Lower lobe of right lung (tissue), 2 donors: ENCODE measurements at regions of chr4 and their contacts with region 1.

Region 1: GRCh38 chr4:15956179-15956850 is 6.7 kb downstream of the FGFBP2 start:
- DNase-seq: peak; percentile 85
- ATAC-seq: peak; percentile 97
- H3K4me3 ChIP-seq: no peak overlapping the region
- H3K27ac ChIP-seq: no peak overlapping the region
- H3K4me1 ChIP-seq: no peaks in the 10 kb centered on the region
- H3K27me3 ChIP-seq: no peaks in the 10 kb centered on the region
- CTCF ChIP-seq: peak; percentile 86

Region 2: DNA sequence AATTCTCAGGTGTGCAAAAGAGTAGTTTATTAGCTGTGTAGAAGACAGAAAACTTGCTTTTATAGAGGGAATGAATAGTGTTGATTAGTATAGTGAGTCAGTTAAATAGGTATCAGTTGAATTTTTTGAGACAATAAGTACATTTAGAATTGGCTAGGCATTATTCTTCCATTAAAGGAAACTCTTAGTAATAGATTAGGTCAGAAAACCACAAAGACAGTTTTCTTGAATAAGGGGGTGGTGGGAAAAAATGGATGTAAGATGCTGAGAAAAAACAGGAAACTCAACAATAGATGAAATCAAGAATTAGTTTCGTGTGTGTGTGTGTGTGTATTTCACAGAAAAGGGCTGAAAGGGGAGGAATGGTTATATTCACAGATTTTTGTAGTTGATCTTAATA is 161.4 kb before region 1 on chr4:
- intact Hi-C with region 1: no loop called
- DNase-seq: no peak
- ATAC-seq: no peak
- H3K4me3 ChIP-seq: no peak overlapping the region
- H3K27ac ChIP-seq: no peak overlapping the region
- H3K4me1 ChIP-seq: no peaks in the 10 kb centered on the region
- H3K27me3 ChIP-seq: no peaks in the 10 kb centered on the region
- CTCF ChIP-seq: no peak

Region 3: DNA sequence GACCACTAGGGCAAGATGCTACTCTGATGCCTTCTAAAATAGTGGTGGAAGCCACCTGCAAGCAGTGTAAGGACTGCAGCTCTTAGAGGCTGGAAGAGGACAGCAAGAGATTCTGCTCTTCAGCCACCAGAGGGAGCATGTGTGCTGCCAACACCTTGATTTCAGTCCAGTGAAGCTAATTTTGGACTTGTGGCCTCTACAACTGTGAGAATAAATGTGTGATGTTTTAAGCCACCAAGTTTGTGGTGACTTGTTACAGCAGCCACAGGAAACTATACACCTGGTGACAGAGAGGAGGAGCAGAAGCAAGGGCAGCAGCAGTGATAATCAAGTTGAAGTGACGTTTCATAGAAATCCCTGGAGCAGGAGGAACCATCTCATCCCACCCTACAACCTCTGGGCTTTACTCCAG is 73.6 kb before region 1 on chr4:
- intact Hi-C with region 1: loop called (anchors 5 kb)
- DNase-seq: no peak
- ATAC-seq: peak; percentile 91
- H3K4me3 ChIP-seq: no peak overlapping the region
- H3K27ac ChIP-seq: no peak overlapping the region
- H3K4me1 ChIP-seq: no peaks in the 10 kb centered on the region
- H3K27me3 ChIP-seq: no peaks in the 10 kb centered on the region
- CTCF ChIP-seq: peak; percentile 92